WTC11 (cell line): ENCODE measurements at regions of chr11 and their contacts with region 1.

Region 1: DNA sequence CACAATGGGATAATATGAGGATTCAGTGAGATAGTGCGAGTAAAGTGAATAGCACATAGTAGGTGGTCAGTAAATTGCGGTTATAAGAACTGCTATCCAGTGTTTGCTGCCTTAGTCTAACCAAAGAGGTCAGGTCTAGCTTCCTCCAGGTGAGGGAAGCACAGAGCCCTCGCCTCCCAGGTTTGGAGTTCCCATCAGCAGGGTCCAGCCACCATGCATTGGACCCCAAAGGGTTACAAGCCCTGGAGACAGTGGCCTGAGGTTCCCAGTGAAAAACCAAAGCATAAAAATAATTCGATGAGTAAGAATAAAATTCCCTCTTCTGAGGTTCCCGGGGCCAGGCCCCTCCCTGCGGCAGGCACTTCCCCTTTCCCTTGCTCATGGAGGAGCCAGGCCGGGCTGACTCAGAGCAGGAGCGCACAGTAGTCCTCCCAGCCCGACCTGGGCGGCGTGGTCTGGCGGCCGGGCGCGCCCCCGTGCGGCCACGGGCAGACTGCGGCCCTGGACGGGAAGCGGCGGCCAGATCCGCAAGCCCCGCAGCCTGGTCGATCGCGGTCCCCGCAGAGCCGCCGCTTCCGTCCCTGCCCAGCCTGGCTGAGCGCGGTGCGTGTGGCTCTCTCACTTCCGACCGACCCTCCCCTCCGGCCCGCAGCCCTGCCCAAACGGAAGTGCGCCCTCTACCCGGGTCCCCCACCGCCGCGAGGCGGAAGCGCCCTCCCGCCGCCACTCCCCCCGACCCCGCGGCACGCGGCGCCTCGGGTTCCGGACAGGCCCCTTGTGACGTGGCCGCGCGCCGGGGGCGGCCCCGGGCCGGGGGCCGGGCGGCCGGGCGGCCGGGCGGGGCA is at the start of gene SLC39A13:
- DNase-seq: peak; percentile 94
- ATAC-seq: peak; percentile 88
- H3K4me3 Mint-ChIP-seq: peak within 1 kb of the TSS; percentile 95
- H3K27ac Mint-ChIP-seq: peak within 1 kb of the TSS; percentile 99
- H3K4me1 Mint-ChIP-seq: peaks cover 15% of the 10 kb centered on the region
- H3K27me3 Mint-ChIP-seq: no peaks in the 10 kb centered on the region
- CTCF ChIP-seq: peak; percentile 71
- total RNA-seq, gene SLC39A13: 32.8 to 38.2 TPM (median 35.1 TPM) in 3 replicates

Region 2: DNA sequence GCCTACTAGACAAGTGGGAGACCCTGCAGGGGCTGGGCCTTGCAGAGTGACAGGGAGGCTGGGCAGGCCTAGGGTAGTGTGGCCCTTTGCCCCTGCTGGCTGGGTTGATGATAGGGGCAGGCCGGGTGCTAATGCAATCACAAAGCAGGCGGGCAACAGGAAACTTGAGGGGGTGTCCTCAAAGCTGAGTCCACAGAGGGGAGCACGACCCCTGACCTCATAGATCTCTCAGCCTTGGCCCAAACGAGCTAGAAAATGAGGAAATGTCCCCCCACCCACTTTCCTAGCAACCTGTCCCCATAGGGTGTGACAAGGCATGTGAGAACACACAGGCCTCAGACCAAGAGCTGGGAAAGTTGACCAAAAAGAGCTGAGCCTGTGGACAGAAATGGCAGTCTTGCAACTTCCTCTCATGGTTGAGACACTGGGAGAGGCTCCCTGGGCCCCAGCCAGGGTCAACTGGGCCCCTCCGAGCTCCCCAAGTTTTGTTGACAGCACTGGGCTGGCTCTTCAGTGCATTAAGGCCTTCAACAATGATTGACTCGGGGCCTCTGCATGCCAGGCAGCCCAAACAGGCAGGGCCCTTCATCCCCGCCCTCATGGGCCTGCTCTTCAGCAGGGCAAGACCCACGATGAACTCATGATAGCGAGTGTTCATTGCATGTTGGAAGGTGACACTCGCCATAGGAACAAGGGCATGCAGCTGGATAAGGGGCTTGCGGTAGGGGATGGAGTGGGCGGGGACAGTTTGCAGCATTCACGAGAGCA is 19.9 kb before region 1 on chr11:
- CTCF ChIA-PET with region 1: interaction called, 10 read pairs
- POLR2A ChIA-PET with region 1: no interaction called
- DNase-seq: no peak
- ATAC-seq: no peak
- H3K4me3 Mint-ChIP-seq: no peak overlapping the region
- H3K27ac Mint-ChIP-seq: no peak overlapping the region
- H3K4me1 Mint-ChIP-seq: no peaks in the 10 kb centered on the region
- H3K27me3 Mint-ChIP-seq: no peaks in the 10 kb centered on the region; the same call in 1 of the 2 replicates
- CTCF ChIP-seq: no peak

Region 3: GRCh38 chr11:47426061-47426956 is 18.3 kb after region 1 on chr11 and contains the start of gene PSMC3:
- CTCF ChIA-PET with region 1: interaction called, 23 read pairs
- POLR2A ChIA-PET with region 1: interaction called, 5 read pairs
- DNase-seq: peak; percentile 99
- ATAC-seq: peak; percentile 97
- H3K4me3 Mint-ChIP-seq: peak within 1 kb of the TSS; percentile 99
- H3K27ac Mint-ChIP-seq: peak within 1 kb of the TSS; percentile 100
- H3K4me1 Mint-ChIP-seq: peaks cover 13% of the 10 kb centered on the region
- H3K27me3 Mint-ChIP-seq: no peaks in the 10 kb centered on the region
- CTCF ChIP-seq: no peak
- total RNA-seq, gene PSMC3: 141 to 162 TPM (median 143 TPM) in 3 replicates

Region 4: GRCh38 chr11:47514825-47515647 is 107.1 kb after region 1 on chr11:
- CTCF ChIA-PET with region 1: no interaction called
- POLR2A ChIA-PET with region 1: no interaction called
- DNase-seq: no peak
- ATAC-seq: peak; percentile 39
- H3K4me3 Mint-ChIP-seq: no peak overlapping the region
- H3K27ac Mint-ChIP-seq: peak overlapping the region; percentile 77
- H3K4me1 Mint-ChIP-seq: peaks cover 61% of the 10 kb centered on the region
- H3K27me3 Mint-ChIP-seq: no peaks in the 10 kb centered on the region
- CTCF ChIP-seq: no peak

Region 5: DNA sequence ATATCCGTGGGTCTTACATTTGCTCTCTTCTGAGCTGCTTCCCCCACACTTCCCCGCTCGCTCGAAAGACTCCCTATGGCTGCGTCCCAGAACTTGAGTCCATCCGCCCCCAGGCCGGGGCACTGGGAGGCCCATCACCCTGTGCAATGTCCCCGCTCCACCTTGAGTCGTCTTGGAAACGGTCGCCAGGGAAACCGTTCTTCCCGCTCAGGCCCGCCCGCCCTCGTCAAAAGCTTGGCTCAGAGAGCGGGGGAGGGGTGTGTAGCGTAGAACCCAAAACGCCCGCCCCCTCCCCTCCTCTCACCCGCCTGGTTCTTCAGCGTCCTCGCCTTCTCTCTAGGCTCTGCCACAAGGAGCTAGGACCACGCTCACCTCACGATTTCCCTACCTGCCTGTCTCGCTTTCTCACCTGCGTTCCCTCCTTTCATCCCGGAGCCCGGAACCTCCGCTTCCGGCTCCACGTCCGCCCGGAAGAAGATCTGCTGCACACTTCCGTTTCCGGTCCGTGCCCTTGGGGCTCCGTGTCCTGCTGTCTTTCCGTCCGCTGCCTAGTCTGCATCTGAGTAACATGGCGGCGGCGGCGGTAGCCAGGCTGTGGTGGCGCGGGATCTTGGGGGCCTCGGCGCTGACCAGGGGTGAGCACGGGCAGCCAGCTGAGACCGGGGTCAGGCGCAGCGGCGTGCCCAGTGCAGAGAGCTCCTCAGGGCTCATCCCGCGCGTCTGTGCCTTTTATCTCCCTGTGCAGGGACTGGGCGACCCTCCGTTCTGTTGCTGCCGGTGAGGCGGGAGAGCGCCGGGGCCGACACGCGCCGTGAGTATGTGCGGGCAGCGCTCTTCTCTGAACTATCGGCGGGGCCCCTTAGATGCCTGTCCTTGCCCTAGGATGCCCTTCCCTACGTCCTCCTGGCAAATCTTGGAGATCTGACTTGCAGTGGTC is 170.8 kb after region 1 on chr11 and contains the starts of genes KBTBD4 and NDUFS3:
- CTCF ChIA-PET with region 1: no interaction called
- POLR2A ChIA-PET with region 1: no interaction called
- DNase-seq: peak; percentile 91
- ATAC-seq: peak; percentile 93
- H3K4me3 Mint-ChIP-seq: peak within 1 kb of the TSS; percentile 93
- H3K27ac Mint-ChIP-seq: peak within 1 kb of the TSS; percentile 99
- H3K4me1 Mint-ChIP-seq: peaks cover 18% of the 10 kb centered on the region
- H3K27me3 Mint-ChIP-seq: no peaks in the 10 kb centered on the region; the same call in 1 of the 2 replicates
- CTCF ChIP-seq: no peak
- total RNA-seq, gene KBTBD4: 12.3 to 14.3 TPM (median 13.9 TPM) in 3 replicates
- total RNA-seq, gene NDUFS3: 111 to 140 TPM (median 125 TPM) in 3 replicates